ENCODE measurements at regions of chr9 and their contacts with region 1.

Region 1: DNA sequence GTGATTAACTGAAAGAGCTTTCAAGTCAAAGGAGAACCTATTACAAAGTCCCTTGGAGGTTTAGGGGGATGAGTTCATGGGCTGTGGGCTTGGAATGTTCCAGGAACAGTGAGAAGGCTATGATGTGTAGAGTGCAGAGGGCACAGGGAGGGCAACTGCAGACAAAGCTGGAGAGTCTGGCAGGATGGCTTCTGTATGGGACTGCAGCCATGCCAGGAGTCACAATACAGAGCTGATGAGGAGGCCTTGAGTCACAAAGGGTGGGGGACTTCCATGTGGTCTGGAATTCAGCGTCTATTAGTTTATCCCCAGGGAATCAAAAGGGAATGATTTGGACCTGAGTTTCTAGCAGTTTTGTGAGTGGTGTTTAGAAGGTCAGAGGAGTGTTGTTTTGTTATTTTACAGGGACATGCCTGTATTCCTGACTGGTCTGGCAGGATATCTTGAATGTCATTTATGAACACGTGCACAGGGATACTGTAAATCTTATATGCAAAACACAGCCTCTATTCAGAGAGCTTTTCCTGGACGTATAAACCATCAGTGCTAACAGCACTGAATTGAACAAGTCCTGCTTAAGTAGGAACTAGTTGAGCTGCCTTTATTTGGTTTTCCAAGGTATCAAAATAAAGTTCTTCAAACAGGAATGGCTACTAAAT is 14.3 kb upstream of the TEK start:
- DNase-seq: peak in 1 of 5 donors; percentile 41
- ATAC-seq: peak in 3 of 4 donors; percentile 73 to 78 (median 75)
- H3K4me3 ChIP-seq: no peak overlapping the region
- H3K27ac ChIP-seq: peak overlapping the region in 3 of 12 donors; percentile 18 to 35 (median 24)
- H3K4me1 ChIP-seq: peaks cover 0 to 10% (median 0%) of the 10 kb centered on the region in 12 donors
- H3K27me3 ChIP-seq: no peaks in the 10 kb centered on the region
- CTCF ChIP-seq: no peak
- POLR2A ChIP-seq: no peak

Region 2: GRCh38 chr9:27154908-27155307 is 60.1 kb after region 1 on chr9:
- intact Hi-C with region 1: loop called in 1 of 10 experiments (anchors 10 kb)
- DNase-seq: no peak
- ATAC-seq: peak in 3 of 4 donors; percentile 32 to 69 (median 52)
- H3K4me3 ChIP-seq: no peak overlapping the region
- H3K27ac ChIP-seq: no peak overlapping the region
- H3K4me1 ChIP-seq: peaks cover 0 to 38% (median 17%) of the 10 kb centered on the region in 12 donors
- H3K27me3 ChIP-seq: no peaks in the 10 kb centered on the region
- CTCF ChIP-seq: no peak
- POLR2A ChIP-seq: no peak

Region 3: GRCh38 chr9:27181381-27181780 is 86.6 kb after region 1 on chr9:
- intact Hi-C with region 1: no loop called
- DNase-seq: no peak
- ATAC-seq: no peak
- H3K4me3 ChIP-seq: no peak overlapping the region
- H3K27ac ChIP-seq: no peak overlapping the region
- H3K4me1 ChIP-seq: peaks cover 0 to 25% (median 6%) of the 10 kb centered on the region in 12 donors
- H3K27me3 ChIP-seq: no peaks in the 10 kb centered on the region
- CTCF ChIP-seq: no peak
- POLR2A ChIP-seq: no peak

Measured in heart left ventricle (tissue), 16 donors.